HEK293 (cell line): ENCODE measurements at regions of chr1 and their contacts with region 1.

Region 1: GRCh38 chr1:156572663-156573018 is 276 bp upstream of the IQGAP3 start:
- H3K4me3 ChIP-seq: peak overlapping the region; percentile 98
- H3K27ac ChIP-seq: no peak overlapping the region
- H3K4me1 ChIP-seq: no peaks in the 10 kb centered on the region; the same call in 1 of the 2 replicates
- CTCF ChIP-seq: no peak

Region 2: DNA sequence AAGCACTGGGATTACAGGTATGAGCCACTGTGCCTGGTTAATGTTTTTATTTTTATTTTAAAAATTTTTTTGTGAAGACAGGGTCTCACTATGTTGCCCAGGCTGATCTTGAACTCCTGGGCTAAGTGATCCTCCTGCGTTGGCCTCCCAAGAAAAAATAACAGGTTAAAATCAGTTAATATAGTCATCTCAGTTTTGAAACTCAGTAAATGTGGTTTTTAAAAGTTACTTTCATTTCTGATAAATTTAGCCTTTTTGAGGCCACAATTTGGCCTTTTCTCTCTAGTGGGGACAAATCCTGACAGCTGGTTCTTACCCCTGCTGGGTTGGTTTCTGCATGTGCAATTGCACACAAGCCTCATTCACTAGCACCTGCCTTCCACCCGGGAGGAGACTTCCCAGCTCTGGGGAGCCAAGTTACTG is 346.5 kb before region 1 on chr1:
- CTCF ChIA-PET with region 1: no interaction called
- POLR2A ChIA-PET with region 1: no interaction called
- H3K4me3 ChIP-seq: no peak overlapping the region
- H3K27ac ChIP-seq: no peak overlapping the region
- H3K4me1 ChIP-seq: no peaks in the 10 kb centered on the region
- CTCF ChIP-seq: no peak

Region 3: DNA sequence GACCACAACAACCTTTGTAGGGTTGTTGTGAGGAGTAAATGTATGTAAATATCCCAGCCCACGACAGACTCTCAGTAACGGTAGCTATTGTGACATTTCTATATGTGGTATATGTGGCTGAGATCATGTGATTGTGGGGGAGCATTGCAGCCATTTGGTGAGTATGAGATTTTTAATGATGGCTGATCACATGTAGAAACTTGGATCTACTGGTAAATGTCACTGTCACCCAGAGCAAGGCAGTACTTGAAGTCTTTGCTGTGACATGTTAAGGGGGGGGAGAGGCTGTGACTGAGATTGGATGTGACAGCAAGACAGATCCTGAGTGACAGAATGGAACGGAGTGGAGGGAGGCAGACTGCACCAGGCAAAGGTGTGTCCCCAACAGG is 48.2 kb before region 1 on chr1:
- CTCF ChIA-PET with region 1: no interaction called
- POLR2A ChIA-PET with region 1: no interaction called
- H3K4me3 ChIP-seq: no peak overlapping the region
- H3K27ac ChIP-seq: no peak overlapping the region
- H3K4me1 ChIP-seq: no peaks in the 10 kb centered on the region
- CTCF ChIP-seq: no peak

Region 4: DNA sequence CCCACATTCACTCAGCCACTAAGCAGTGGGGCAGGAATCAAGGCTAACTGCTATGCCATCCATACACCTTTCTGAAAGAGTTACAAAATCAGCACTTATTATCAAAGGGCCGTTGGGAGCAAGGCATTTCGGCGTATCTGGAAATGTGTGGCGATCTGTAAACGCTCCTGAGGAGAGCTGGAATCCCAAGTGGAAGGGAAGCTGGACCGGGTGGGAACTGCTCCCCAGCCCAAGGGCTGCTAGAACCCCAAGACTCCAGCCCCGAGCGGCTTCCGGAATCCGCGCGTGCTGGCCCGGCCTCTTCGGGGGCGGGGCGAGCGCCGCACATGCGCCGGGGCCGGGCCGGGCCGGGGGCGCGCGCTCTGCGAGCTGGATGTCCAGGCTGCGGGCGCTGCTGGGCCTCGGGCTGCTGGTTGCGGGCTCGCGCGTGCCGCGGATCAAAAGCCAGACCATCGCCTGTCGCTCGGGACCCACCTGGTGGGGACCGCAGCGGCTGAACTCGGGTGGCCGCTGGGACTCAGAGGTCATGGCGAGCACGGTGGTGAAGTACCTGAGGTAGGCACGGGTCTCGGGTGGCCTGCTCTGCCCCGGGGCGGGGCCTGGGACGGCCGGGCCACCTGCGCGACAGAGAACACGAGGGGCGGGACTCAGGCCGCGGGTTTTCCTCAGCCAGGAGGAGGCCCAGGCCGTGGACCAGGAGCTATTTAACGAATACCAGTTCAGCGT is 19.0 kb after region 1 on chr1 and contains the start of gene NAXE:
- CTCF ChIA-PET with region 1: interaction called, 4 read pairs
- POLR2A ChIA-PET with region 1: interaction called, 11 read pairs
- H3K4me3 ChIP-seq: peak within 1 kb of the TSS; percentile 85
- H3K27ac ChIP-seq: peak within 1 kb of the TSS; percentile 83
- H3K4me1 ChIP-seq: no peaks in the 10 kb centered on the region
- CTCF ChIP-seq: no peak; the same call in 1 of the 2 replicates